Breast epithelium (tissue), 4 donors: ENCODE measurements at regions of chr17 and their contacts with region 1.

Region 1: DNA sequence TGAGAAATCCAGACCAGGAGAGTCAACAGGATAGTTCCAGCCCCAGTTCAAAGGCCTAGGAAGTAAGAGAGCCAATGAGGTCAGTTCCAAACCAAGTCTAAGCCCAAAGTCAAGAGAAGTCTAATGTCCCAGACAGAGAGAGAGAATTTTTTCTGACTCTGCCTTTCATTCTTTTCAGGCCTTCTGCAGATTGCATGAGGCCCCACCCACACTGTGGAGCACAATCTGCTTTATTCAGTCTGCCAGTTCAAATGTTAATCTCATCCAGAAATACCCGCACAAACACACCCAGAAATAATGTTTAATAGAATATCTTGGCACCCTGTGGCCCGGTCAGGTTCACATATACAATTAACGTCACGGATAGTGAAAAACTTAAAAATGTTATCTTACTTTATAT is 962.4 kb upstream of the SOX9 start:
- DNase-seq: no peak
- H3K4me3 ChIP-seq: no peak overlapping the region
- H3K27ac ChIP-seq: no peak overlapping the region
- H3K4me1 ChIP-seq: no peaks in the 10 kb centered on the region
- H3K27me3 ChIP-seq: peaks cover 0 to 8% of the 10 kb centered on the region in 2 donors
- CTCF ChIP-seq: no peak
- POLR2A ChIP-seq: no peak

Region 2: DNA sequence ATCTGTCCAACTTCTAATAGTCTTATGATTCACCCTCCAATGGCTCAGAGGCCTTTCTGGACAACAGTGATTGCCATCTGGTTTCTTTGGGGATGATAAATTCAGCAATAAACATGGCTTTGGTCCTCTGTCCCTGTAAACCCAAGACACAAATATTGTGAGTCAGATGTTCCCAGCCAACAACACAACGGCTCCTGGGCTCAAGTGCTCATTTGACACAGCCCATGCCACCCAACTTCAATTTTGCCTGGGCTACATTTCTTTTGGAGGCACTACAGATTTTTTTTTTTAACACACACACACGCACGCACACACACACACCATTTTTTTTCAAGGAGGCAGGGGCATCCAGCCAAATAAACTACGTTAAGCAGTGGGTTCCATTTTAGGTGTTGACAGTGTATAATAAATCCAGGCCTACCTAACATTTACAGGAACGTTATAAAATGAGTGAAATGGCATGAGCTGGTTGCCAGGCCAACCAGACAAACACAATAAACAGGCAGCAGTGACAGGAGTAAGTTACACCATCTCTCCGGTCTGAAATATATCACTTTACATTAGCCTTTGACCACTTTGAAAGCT is 22.5 kb after region 1 on chr17:
- intact Hi-C with region 1: no loop called
- DNase-seq: no peak
- H3K4me3 ChIP-seq: no peak overlapping the region
- H3K27ac ChIP-seq: no peak overlapping the region
- H3K4me1 ChIP-seq: no peaks in the 10 kb centered on the region
- H3K27me3 ChIP-seq: no peaks in the 10 kb centered on the region
- CTCF ChIP-seq: no peak
- POLR2A ChIP-seq: no peak

Region 3: GRCh38 chr17:71639865-71640264 is 481.4 kb after region 1 on chr17:
- intact Hi-C with region 1: loop called (anchors 5 kb)
- DNase-seq: no peak
- H3K4me3 ChIP-seq: no peak overlapping the region
- H3K27ac ChIP-seq: no peak overlapping the region
- H3K4me1 ChIP-seq: no peaks in the 10 kb centered on the region
- H3K27me3 ChIP-seq: no peaks in the 10 kb centered on the region
- CTCF ChIP-seq: no peak
- POLR2A ChIP-seq: no peak

Region 4: GRCh38 chr17:72850410-72851118 is 1692.1 kb after region 1 on chr17:
- intact Hi-C with region 1: no loop called
- DNase-seq: no peak
- H3K4me3 ChIP-seq: no peak overlapping the region
- H3K27ac ChIP-seq: no peak overlapping the region
- H3K4me1 ChIP-seq: no peaks in the 10 kb centered on the region
- H3K27me3 ChIP-seq: no peaks in the 10 kb centered on the region
- CTCF ChIP-seq: no peak
- POLR2A ChIP-seq: no peak